PC-9 (cell line): ENCODE measurements at regions of chr13 and their contacts with region 1.

Region 1: DNA sequence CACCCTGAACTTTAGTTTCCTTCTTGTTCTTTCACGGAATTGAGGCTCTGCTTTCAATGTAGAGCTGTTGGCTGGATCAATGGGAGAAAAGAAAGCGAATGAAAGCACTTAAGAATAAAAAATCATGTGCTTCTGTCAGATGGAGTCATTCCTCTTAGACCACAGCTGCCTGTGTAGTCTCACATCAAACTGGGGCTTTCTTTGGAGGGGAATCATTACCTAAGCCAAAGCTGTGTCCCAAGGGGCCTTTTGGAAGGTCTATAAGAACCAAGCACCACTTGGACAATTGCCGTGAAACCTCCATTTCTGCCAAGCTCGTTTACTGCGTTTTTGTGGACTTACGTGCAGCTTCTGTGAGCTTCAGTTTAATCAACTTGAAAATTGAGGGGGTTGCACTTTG is 44.2 kb upstream of the RNF113B start:
- DNase-seq: no peak
- H3K4me3 ChIP-seq: no peak overlapping the region
- H3K27ac ChIP-seq: no peak overlapping the region
- H3K4me1 ChIP-seq: peaks cover 16% of the 10 kb centered on the region
- H3K27me3 ChIP-seq: no peaks in the 10 kb centered on the region
- CTCF ChIP-seq: no peak

Region 2: DNA sequence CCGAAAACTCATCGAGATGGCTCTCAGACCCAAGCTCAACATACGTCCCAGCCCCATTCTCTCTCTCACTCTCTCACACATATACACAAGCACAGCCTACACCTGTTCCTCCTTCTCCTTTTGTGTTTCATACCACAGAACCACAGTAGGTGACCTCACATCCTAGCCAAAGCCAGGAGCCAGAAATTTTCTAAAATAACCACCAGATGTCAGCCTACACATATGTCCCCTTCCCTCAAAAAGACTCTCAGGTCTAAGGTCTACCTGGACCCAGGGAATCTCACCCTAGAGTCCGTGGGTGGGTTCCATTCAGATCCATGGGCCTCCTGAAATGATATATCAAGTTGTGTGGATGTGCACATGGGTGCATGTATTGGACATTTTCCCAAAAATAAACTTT is 371.9 kb before region 1 on chr13:
- CTCF ChIA-PET with region 1: no interaction called
- POLR2A ChIA-PET with region 1: no interaction called
- intact Hi-C with region 1: no loop called
- DNase-seq: peak; percentile 19 to 46
- H3K4me3 ChIP-seq: no peak overlapping the region
- H3K27ac ChIP-seq: no peak overlapping the region
- H3K4me1 ChIP-seq: peaks cover 9% of the 10 kb centered on the region; the same call in 1 of the 2 replicates
- H3K27me3 ChIP-seq: no peaks in the 10 kb centered on the region
- CTCF ChIP-seq: peak; percentile 71

Region 3: GRCh38 chr13:98237331-98237730 is 16.1 kb after region 1 on chr13:
- CTCF ChIA-PET with region 1: no interaction called
- POLR2A ChIA-PET with region 1: interaction called, 3 read pairs
- intact Hi-C with region 1: loop called (anchors 1 kb)
- DNase-seq: no peak
- H3K4me3 ChIP-seq: no peak overlapping the region
- H3K27ac ChIP-seq: no peak overlapping the region
- H3K4me1 ChIP-seq: no peaks in the 10 kb centered on the region
- H3K27me3 ChIP-seq: no peaks in the 10 kb centered on the region
- CTCF ChIP-seq: no peak